Left cardiac atrium (tissue), 4 donors: ENCODE measurements at regions of chr16 and their contacts with region 1.

Region 1: GRCh38 chr16:55842369-55843104 is 9.6 kb upstream of the CES1 start:
- DNase-seq: no peak
- ATAC-seq: peak; percentile 51 to 80

Region 2: GRCh38 chr16:55711959-55712876 is 130.3 kb before region 1 on chr16:
- intact Hi-C with region 1: loop called (anchors 1 to 2 kb)
- DNase-seq: peak; percentile 77
- ATAC-seq: peak; percentile 50 to 72

Region 3: DNA sequence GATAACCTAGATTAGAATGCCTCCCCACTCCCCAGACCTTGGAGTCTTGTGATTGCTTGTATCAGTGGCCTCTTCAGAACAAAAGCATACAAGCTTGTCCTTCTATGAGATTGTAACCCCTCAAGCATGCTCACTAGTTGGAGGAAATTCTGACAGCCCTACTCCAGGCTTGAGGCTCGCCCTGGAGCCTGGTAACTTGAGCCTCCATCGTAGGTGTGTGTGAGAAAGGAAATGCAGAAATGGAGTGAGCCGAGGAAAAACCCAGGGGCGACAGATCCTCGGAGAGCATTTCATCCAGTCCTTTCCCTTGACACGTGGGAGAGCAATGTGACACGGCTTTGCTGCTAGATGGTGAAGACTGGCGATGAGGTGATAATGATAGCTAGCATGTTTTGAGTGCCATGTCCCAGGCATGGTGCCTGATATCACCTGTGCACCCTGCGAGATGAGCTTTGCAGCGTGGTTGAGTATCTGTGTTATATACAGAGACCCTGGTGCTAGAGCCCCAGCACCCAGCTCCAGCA is 380.0 kb after region 1 on chr16:
- intact Hi-C with region 1: no loop called
- DNase-seq: no peak
- ATAC-seq: no peak